Posterior vena cava (tissue), 2 donors: ENCODE measurements at regions of chr15 and their contacts with region 1.

Region 1: DNA sequence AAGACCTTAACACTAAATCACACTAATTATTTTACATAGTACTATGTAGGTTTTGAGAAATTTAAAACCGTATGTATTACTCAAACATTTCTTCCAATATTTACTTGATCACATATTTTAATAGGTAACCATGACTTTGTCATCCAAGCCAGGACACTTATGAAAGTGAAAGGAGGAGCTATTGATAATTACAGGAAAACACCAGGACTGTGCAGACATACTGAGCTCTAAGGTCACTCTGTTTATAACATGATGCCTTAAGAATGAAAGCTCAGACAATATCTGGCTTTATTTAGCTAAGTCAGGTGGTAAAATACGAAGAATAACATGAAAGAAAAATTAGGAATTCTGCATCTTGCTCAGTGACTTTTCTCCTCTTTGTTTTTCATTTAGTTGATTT is 216.0 kb upstream of the NANOGP8 start:
- DNase-seq: no peak

Region 2: GRCh38 chr15:35206060-35206675 is 94.9 kb before region 1 on chr15:
- intact Hi-C with region 1: no loop called
- DNase-seq: no peak

Region 3: GRCh38 chr15:35329521-35329961 is 28.5 kb after region 1 on chr15:
- intact Hi-C with region 1: no loop called
- DNase-seq: no peak

Region 4: DNA sequence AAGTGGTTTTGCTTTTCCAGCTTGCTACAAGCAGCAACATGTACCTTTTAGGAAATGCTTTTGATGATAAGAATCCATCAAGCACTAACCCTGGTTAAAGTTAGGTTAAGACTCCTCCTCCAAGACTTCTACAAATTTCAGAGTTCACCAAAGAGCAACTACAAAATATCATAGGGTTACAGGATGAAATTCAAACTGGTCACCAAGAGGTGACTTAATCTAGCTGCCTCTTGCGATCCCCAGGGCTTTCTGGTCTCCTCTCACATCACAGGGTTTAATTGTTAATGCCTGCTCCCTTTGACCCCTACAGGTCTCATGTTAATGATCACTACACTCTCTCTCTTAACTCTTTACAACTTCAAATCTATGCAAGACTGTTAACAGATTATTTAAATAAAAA is 178.3 kb after region 1 on chr15:
- intact Hi-C with region 1: loop called in 1 of 2 experiments (anchors 5 kb)
- DNase-seq: no peak

Region 5: GRCh38 chr15:35834216-35834830 is 533.2 kb after region 1 on chr15:
- intact Hi-C with region 1: no loop called
- DNase-seq: no peak